ENCODE measurements at regions of chrX and their contacts with region 1.

Region 1: GRCh38 chrX:72620550-72621145 is 48.0 kb upstream of the HDAC8 start:
- DNase-seq: peak; percentile 77
- H3K4me3 ChIP-seq: no peak overlapping the region
- H3K27ac ChIP-seq: peak overlapping the region; percentile 80
- H3K4me1 ChIP-seq: peaks cover 30% of the 10 kb centered on the region
- H3K27me3 ChIP-seq: no peaks in the 10 kb centered on the region
- CTCF ChIP-seq: no peak

Region 2: GRCh38 chrX:72584163-72584562 is 36.5 kb before region 1 on chrX:
- CTCF ChIA-PET with region 1: no interaction called
- dilution Hi-C with region 1: loop called (anchors 5 kb)
- in situ Hi-C with region 1: no loop called
- intact Hi-C with region 1: no loop called
- DNase-seq: no peak
- H3K4me3 ChIP-seq: no peak overlapping the region
- H3K27ac ChIP-seq: no peak overlapping the region
- H3K4me1 ChIP-seq: no peaks in the 10 kb centered on the region
- H3K27me3 ChIP-seq: peaks cover 5% of the 10 kb centered on the region
- CTCF ChIP-seq: no peak

Region 3: GRCh38 chrX:72685810-72686463 is 65.3 kb after region 1 on chrX:
- CTCF ChIA-PET with region 1: no interaction called
- dilution Hi-C with region 1: no loop called
- in situ Hi-C with region 1: no loop called
- intact Hi-C with region 1: loop called (anchors 5 kb)
- DNase-seq: peak; percentile 92
- H3K4me3 ChIP-seq: peak overlapping the region in 2 of 3 experiments; percentile 23 to 29
- H3K27ac ChIP-seq: peak overlapping the region; percentile 87
- H3K4me1 ChIP-seq: peaks cover 5% of the 10 kb centered on the region
- H3K27me3 ChIP-seq: peaks cover 1% of the 10 kb centered on the region
- CTCF ChIP-seq: no peak